Heart left ventricle (tissue), 16 donors: ENCODE measurements at regions of chr1 and their contacts with region 1.

Region 1: DNA sequence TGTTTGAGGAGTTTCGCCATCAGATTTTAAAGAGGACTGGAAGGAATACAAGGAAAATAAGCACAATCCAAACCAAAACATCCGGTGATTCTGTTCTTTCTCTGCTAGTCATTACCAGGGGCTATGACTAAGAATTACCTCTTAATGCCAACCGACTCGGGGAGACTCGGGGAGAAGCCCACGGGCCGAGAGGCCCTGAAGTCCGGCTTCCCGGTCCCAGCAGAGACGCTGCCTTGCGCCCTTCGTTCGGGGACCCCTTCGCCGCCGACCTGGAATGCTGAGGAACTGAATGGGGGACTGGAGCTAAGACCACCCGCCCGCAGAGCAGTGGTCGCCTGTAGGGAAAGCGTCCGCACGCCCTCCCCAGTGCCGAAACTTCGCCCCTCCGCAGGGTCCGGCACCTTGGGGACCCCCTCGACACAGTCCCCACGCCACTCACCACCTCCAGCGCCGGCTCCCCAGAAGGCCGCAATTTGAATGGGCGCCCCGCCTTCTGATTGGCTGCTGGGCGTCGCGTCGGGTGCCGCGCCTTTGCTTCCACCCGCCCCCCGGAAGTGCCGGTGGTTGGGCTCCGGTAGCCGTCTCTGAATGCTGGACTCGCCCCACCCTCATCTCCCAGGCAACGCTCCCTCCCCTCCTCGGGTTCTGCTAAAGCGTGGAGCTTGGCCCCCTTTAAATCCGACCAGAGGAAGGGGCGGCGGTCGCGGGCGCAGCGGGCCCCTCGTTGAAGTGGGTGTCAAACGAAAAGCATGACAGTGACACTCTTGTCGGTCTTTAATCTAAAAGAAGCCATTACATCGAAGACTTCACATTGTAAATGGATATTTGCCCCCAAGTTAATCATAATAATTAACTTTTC is at the start of gene KIF14:
- DNase-seq: peak; percentile 92 to 94 (median 94)
- ATAC-seq: peak; percentile 97 to 100 (median 100)
- H3K4me3 ChIP-seq: peak within 1 kb of the TSS; percentile 47 to 87 (median 63)
- H3K27ac ChIP-seq: peak within 1 kb of the TSS in 5 of 12 donors; percentile 4 to 74 (median 40)
- H3K4me1 ChIP-seq: peaks cover 0 to 32% (median 7%) of the 10 kb centered on the region in 12 donors
- H3K27me3 ChIP-seq: no peaks in the 10 kb centered on the region
- CTCF ChIP-seq: no peak
- POLR2A ChIP-seq: no peak
- total RNA-seq, gene KIF14: 0.04 to 2.0 (median 0.14) TPM in 8 of 9 donors, not detected in the other

Region 2: GRCh38 chr1:200526709-200527612 is 93.5 kb before region 1 on chr1:
- intact Hi-C with region 1: no loop called
- DNase-seq: no peak
- ATAC-seq: no peak
- H3K4me3 ChIP-seq: no peak overlapping the region
- H3K27ac ChIP-seq: no peak overlapping the region
- H3K4me1 ChIP-seq: peaks cover 0 to 8% (median 0%) of the 10 kb centered on the region in 12 donors
- H3K27me3 ChIP-seq: peaks cover 0 to 3% (median 0%) of the 10 kb centered on the region in 9 donors
- CTCF ChIP-seq: no peak
- POLR2A ChIP-seq: no peak

Region 3: GRCh38 chr1:200669314-200670241 is 49.1 kb after region 1 on chr1 and contains the start of gene DDX59:
- intact Hi-C with region 1: loop called in 5 of 10 experiments (anchors 2 to 5 kb)
- DNase-seq: peak; percentile 95 to 98 (median 97)
- ATAC-seq: peak; percentile 94 to 96 (median 95)
- H3K4me3 ChIP-seq: peak within 1 kb of the TSS; percentile 58 to 97 (median 85)
- H3K27ac ChIP-seq: peak within 1 kb of the TSS; percentile 98 to 100 (median 100)
- H3K4me1 ChIP-seq: peaks cover 0 to 45% (median 29%) of the 10 kb centered on the region in 12 donors
- H3K27me3 ChIP-seq: no peaks in the 10 kb centered on the region
- CTCF ChIP-seq: no peak
- POLR2A ChIP-seq: peak; percentile 73 to 93
- total RNA-seq, gene DDX59: 12.9 to 21.6 (median 15.9) TPM

Region 4: DNA sequence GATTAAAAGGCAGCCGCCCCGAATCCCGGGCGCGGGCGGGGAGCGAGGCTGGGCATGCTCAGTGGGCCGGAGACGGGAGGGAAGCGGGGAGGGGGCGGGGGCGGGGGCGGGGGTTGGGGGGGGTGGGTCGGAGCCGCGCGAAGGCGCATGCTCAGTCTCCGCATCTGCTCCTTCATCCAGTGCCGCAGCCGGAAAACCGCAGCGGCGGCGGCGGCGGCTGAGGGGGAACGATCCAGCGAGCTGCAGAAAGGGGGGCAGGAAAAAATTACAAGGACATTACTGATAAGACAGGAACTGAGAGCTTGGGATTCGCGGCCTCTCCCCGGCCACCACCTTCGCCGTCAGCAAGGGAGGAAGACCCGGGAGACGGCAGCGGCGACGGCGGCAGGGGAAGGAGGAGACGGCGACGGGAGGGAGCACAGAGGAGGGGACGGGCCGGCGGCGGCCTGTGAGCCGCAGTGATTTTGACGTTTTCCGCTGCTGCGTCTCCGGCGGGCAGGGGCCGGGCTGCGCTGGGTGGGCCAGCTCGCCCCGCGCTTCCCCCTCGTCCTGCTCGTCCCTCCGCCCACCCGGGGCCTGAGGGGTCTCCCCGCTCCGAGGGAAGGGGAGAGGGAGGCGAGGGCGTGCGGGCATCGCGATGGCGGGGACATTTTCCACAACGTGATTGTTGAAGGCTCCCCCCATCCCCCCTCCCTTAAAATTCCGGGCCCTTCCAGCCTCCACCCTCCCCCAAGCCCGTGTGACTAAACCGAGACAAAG is 118.4 kb after region 1 on chr1 and contains the start of gene CAMSAP2:
- intact Hi-C with region 1: loop called in 4 of 10 experiments (anchors 2 to 10 kb)
- DNase-seq: peak; percentile 92 to 94 (median 92)
- ATAC-seq: peak; percentile 91 to 95 (median 92)
- H3K4me3 ChIP-seq: peak within 1 kb of the TSS; percentile 46 to 98 (median 92)
- H3K27ac ChIP-seq: peak within 1 kb of the TSS; percentile 98 to 100 (median 100)
- H3K4me1 ChIP-seq: peaks cover 0 to 38% (median 30%) of the 10 kb centered on the region in 12 donors
- H3K27me3 ChIP-seq: no peaks in the 10 kb centered on the region
- CTCF ChIP-seq: no peak
- POLR2A ChIP-seq: peak in 1 of 2 donors; percentile 91
- total RNA-seq, gene CAMSAP2: 33.5 to 53.7 (median 37.5) TPM

Region 5: DNA sequence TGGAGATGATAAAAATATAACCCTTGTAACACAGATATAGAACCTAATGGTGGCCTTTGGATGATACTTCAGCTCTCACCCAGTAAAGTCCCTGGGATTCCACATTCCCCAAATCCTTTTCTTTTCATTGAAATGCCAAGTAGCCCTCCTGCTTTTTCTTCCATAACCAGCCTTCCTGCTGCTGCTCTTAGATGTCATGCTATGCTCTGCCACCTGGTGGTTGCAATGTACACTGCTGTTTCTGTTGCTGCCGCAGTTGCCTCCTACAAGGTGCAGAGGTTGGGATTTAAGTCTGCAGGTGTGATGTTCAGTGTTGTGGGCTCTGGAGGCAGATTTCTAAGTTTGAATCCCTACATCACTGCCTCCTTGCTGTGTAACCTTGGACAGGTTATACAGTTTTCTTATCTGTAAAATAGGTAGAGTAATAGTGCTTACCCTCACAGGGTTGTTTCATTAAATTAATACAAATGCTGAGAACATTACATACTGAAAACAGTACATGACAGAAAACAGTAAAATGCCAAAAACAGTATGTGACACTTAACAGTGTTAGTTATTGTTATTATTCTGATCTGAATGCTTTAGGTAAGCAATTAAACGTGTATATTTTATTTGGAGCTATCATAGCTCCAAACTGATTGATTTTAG is 182.5 kb after region 1 on chr1:
- intact Hi-C with region 1: loop called (anchors 1 to 5 kb)
- DNase-seq: peak in 4 of 5 donors; percentile 65 to 78 (median 73)
- ATAC-seq: peak; percentile 64 to 90 (median 86)
- H3K4me3 ChIP-seq: no peak overlapping the region
- H3K27ac ChIP-seq: no peak overlapping the region
- H3K4me1 ChIP-seq: peaks cover 0 to 16% (median 2%) of the 10 kb centered on the region in 12 donors
- H3K27me3 ChIP-seq: no peaks in the 10 kb centered on the region
- CTCF ChIP-seq: peak; percentile 89 to 97 (median 93)
- POLR2A ChIP-seq: no peak

Region 6: DNA sequence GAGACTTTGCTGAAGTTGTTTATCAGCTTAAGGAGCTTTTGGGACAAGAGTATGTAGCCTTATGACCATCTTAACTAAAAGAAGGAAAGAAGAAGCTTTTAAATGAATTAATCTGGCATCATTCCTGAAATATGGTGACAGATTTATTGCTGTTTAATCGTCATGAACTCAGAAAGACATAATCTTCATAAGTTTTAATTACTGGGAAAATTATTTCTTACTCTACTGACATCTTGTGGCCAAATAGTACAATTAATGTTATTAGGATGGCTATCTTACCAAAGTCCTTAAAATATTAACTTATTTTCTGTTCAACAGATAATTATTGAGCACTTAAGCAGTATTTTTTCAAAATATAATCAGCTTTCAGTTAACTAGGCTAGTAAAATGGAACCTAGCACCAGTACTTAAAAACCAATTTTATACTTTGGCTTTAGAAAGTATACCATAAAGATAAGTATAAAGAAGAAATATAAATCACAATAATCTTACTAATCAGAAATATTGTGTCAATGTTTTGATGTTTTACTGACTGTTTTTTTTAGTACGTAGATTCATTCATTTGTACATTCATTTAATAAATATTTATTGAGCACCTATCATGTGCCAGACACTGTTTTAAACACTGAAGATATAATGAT is 217.5 kb after region 1 on chr1:
- intact Hi-C with region 1: loop called in 9 of 10 experiments (anchors 2 to 10 kb)
- DNase-seq: no peak
- ATAC-seq: no peak
- H3K4me3 ChIP-seq: no peak overlapping the region
- H3K27ac ChIP-seq: no peak overlapping the region
- H3K4me1 ChIP-seq: no peaks in the 10 kb centered on the region
- H3K27me3 ChIP-seq: no peaks in the 10 kb centered on the region
- CTCF ChIP-seq: peak; percentile 27 to 69 (median 48)
- POLR2A ChIP-seq: no peak

Region 7: DNA sequence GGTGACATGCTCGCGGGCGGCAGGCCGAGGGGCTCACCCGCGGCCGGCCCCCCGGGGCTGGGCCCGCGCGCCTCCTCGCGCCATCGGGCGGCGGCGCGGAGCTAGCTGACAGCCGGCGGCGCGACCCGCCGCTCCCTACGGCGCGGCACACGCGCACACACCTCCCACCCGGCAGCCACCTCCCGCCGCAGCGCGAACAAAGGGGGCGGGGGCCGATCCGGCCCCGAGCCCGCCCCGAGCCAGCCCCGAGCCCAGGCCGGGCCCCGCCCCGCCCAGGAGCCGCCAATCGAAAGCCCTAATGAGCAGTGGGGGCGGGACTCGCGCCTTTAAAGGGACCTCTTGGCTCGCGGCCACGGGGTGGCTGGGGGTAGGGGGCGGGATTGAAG is 403.0 kb after region 1 on chr1 and contains the start of gene KIF21B:
- intact Hi-C with region 1: loop called in 1 of 10 experiments (anchors 10 kb)
- DNase-seq: peak; percentile 81 to 90 (median 84)
- ATAC-seq: peak; percentile 68 to 97 (median 86)
- H3K4me3 ChIP-seq: peak within 1 kb of the TSS; percentile 12 to 75 (median 58)
- H3K27ac ChIP-seq: peak within 1 kb of the TSS in 3 of 12 donors; percentile 15 to 83 (median 29)
- H3K4me1 ChIP-seq: peaks cover 0 to 93% (median 24%) of the 10 kb centered on the region in 12 donors
- H3K27me3 ChIP-seq: no peaks in the 10 kb centered on the region
- CTCF ChIP-seq: no peak
- POLR2A ChIP-seq: no peak
- total RNA-seq, gene KIF21B: 0.21 to 3.6 (median 0.47) TPM